ENCODE measurements at regions of chr2 and their contacts with region 1.

Region 1: GRCh38 chr2:70258532-70258874 is 566 bp downstream of the PCYOX1 start:
- DNase-seq: peak; percentile 82

Region 2: DNA sequence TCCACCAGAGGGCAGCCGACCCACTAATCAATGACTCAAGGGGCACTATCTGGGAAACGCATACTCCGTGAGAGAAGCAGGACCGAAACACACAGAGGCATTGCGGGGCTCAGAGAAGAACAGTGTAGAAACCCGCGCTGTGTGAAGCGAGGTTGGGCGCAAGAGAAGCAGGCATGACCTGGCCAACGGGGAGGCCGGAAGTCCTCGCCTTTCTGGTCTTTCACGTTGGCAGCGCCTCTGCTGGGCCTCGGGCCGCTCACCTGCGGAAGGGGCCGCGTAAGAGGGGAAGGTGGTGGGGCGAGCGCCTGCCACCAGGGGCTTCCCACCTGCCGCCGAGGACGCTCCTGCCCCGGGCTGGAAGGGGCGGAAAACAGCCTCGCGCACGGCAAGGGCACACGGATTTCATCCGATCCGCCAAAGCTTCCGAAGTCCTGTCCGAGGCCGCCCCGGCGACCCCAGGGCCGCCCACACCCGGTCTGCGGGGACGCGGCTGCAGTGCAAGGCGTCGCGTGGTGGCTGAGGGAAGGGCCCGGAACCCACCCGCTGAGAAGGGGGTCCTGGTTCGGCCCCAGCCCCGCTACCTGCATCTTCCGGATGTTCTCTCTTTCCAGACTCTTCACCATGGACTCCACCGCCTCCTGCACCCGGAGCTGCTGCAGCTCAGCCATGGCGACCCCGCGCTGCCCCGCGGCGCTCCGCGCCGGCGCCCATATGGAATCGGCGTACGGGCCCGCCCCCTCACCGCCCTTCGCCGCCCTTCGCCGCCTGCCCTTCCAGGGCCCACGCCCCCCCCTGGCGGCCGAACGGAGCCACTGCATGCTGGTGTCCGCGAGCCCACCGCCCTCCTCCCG is 43.1 kb after region 1 on chr2 and contains the start of gene FAM136A:
- intact Hi-C with region 1: loop called (anchors 2 kb)
- DNase-seq: peak; percentile 96
- total RNA-seq, gene FAM136A: 21.3 TPM

Measured in cardiac septum (tissue), 1 donor.